ENCODE measurements at regions of chr13 and their contacts with region 1.

Region 1: GRCh38 chr13:33228648-33229445 is 56.7 kb downstream of the STARD13 start:
- H3K4me3 ChIP-seq: no peak overlapping the region
- H3K27ac ChIP-seq: no peak overlapping the region
- H3K4me1 ChIP-seq: no peaks in the 10 kb centered on the region
- CTCF ChIP-seq: peak; percentile 25; the same call in 1 of the 2 replicates

Region 2: DNA sequence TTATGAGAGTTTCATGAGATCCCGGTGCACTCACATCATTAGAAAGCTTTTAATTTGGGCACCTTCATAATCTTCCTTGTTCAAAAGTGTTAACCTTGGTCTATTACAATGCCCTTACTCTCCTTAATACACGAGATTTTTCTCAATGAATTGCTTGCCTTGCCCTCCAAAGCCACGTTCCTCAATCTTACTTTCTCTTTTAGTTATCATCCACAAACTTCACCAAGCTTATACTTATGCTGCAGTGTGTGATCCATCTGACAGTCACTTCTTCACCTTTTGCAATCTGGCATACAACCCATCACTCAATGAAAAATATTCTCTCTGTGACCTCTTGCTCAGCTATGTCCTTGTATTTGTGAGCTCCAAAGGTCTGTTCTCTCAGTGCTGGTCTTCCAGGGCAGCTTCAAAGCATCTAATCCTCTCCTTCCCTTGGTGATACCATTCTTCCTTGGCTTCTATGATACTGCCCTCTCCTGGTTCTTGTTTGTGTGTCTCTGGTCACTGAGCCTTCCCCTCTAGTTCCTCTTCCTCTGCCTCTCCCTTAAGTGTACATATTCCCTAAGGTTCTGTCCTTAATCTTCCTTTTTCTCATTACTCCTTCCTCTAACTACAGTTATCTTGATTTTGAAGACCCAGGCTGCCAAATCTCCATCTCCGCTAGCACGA is 258.9 kb after region 1 on chr13:
- CTCF ChIA-PET with region 1: interaction called, 10 read pairs
- POLR2A ChIA-PET with region 1: no interaction called
- H3K4me3 ChIP-seq: no peak overlapping the region
- H3K27ac ChIP-seq: no peak overlapping the region
- H3K4me1 ChIP-seq: no peaks in the 10 kb centered on the region
- CTCF ChIP-seq: no peak